Activated CD4-positive, alpha-beta T cell treated with anti-CD3 and anti-CD28 coated beads for 36 hours (primary cell): ENCODE measurements at regions of chr5 and their contacts with region 1.

Region 1: GRCh38 chr5:109852371-109853155 is 162.8 kb downstream of the MAN2A1 start:
- DNase-seq: no peak
- ATAC-seq: peak; percentile 88
- H3K4me3 Mint-ChIP-seq: no peak overlapping the region
- H3K27ac Mint-ChIP-seq: peak overlapping the region; percentile 53
- H3K4me1 Mint-ChIP-seq: peaks cover 73% of the 10 kb centered on the region
- H3K27me3 Mint-ChIP-seq: no peaks in the 10 kb centered on the region

Region 2: GRCh38 chr5:109830955-109831502 is 21.5 kb before region 1 on chr5:
- CTCF ChIA-PET with region 1: no interaction called
- POLR2A ChIA-PET with region 1: no interaction called
- intact Hi-C with region 1: no loop called
- DNase-seq: no peak
- ATAC-seq: no peak
- H3K4me3 Mint-ChIP-seq: no peak overlapping the region
- H3K27ac Mint-ChIP-seq: no peak overlapping the region
- H3K4me1 Mint-ChIP-seq: peaks cover 4% of the 10 kb centered on the region
- H3K27me3 Mint-ChIP-seq: no peaks in the 10 kb centered on the region

Region 3: DNA sequence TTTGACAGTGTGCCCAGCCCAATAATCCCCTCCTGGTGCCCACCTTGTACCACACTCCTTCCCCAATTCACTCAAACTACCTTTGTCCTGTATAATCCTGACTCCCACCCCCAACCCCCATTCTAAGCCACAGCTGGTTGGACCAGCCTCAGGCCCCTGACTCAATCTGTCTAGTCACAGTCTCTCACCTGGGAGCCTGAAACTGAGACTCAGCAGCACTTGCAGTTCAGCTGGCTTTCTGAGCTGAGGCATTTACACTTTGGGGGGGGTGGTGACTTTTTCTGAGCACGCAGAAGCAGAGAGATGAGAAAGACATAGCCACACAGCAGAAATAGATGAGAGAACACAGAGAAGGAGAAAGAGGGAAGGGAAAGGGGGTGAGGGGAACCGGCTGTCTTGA is 84.4 kb after region 1 on chr5:
- CTCF ChIA-PET with region 1: no interaction called
- POLR2A ChIA-PET with region 1: no interaction called
- intact Hi-C with region 1: loop called in 1 of 2 experiments (anchors 5 kb)
- DNase-seq: peak; percentile 74
- ATAC-seq: peak; percentile 75
- H3K4me3 Mint-ChIP-seq: no peak overlapping the region
- H3K27ac Mint-ChIP-seq: peak overlapping the region; percentile 72
- H3K4me1 Mint-ChIP-seq: peaks cover 23% of the 10 kb centered on the region
- H3K27me3 Mint-ChIP-seq: peaks cover 2% of the 10 kb centered on the region

Region 4: DNA sequence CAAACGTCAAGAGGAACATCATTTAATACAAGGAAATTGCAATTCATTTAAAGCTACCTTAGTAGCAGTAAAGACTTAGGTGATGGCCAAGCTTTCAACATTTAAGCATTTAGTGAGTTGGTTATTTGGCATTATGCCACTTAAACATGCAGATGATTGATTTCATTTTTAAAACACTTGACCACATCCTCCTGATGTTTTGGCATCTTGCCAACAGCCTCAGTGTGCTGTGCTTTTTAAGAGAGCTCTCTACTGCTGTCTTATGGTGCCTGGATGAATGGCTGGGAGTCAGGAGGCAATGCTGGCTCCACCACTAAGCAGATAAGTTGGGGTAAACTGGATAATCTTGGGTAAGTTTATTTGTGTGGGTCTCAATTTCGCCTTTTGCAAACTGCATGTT is 201.7 kb after region 1 on chr5:
- CTCF ChIA-PET with region 1: no interaction called
- POLR2A ChIA-PET with region 1: no interaction called
- intact Hi-C with region 1: loop called in 1 of 2 experiments (anchors 2 kb)
- DNase-seq: peak; percentile 84
- ATAC-seq: peak; percentile 94
- H3K4me3 Mint-ChIP-seq: no peak overlapping the region
- H3K27ac Mint-ChIP-seq: peak overlapping the region; percentile 76
- H3K4me1 Mint-ChIP-seq: peaks cover 28% of the 10 kb centered on the region
- H3K27me3 Mint-ChIP-seq: no peaks in the 10 kb centered on the region